ENCODE measurements at regions of chr2 and their contacts with region 1.

Region 1: GRCh38 chr2:190880378-190881073 is at the start of gene GLS:
- DNase-seq: peak; percentile 98
- H3K4me3 Mint-ChIP-seq: peak within 1 kb of the TSS; percentile 94
- H3K27ac Mint-ChIP-seq: peak within 1 kb of the TSS; percentile 100
- H3K4me1 Mint-ChIP-seq: peaks cover 48% of the 10 kb centered on the region
- H3K27me3 Mint-ChIP-seq: no peaks in the 10 kb centered on the region
- total RNA-seq, gene GLS: 146 to 150 TPM

Region 2: DNA sequence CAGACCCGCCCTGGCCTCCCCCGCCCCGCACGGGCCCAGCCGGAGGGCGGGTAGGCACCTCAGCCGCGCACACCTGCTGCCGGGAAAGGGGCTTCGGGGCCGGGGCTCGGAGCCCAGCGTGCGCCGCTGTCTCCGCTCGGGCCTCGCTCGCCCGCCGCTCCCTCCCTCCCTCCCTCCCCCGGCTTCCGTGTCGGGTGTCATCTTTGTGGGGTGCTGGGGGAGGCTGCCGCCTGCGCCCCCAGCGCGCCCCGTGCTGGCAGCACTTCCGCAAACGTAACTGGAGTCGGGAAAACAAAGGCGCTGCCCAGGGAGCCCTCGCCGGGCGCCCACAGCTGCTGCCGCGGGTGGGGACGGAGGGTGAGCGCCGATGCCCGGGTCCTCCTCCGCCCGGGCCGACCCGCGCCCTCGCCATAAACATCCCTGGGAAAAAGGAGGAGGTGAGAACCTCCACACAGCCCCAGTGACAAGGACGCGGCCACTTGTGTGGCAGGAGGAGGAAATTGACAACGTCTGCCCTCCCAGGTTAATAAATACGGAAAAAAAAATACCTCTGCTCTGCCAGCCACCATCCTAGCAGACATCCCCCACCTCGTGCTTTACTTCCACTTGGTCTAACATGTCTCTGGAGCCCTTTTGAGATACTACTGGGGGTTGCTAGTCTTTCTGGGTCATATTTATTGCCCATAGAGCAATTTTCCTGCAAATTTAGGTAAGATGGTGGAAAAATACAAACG is 471.8 kb before region 1 on chr2:
- CTCF ChIA-PET with region 1: no interaction called
- POLR2A ChIA-PET with region 1: interaction called, 17 read pairs
- DNase-seq: peak; percentile 76
- H3K4me3 Mint-ChIP-seq: peak overlapping the region; percentile 84
- H3K27ac Mint-ChIP-seq: peak overlapping the region; percentile 88
- H3K4me1 Mint-ChIP-seq: peaks cover 38% of the 10 kb centered on the region
- H3K27me3 Mint-ChIP-seq: no peaks in the 10 kb centered on the region

Region 3: GRCh38 chr2:190858817-190859216 is 21.7 kb before region 1 on chr2:
- CTCF ChIA-PET with region 1: interaction called, 3 read pairs
- POLR2A ChIA-PET with region 1: interaction called, 23 read pairs
- DNase-seq: no peak
- H3K4me3 Mint-ChIP-seq: no peak overlapping the region
- H3K27ac Mint-ChIP-seq: no peak overlapping the region
- H3K4me1 Mint-ChIP-seq: peaks cover 9% of the 10 kb centered on the region
- H3K27me3 Mint-ChIP-seq: no peaks in the 10 kb centered on the region

Region 4: DNA sequence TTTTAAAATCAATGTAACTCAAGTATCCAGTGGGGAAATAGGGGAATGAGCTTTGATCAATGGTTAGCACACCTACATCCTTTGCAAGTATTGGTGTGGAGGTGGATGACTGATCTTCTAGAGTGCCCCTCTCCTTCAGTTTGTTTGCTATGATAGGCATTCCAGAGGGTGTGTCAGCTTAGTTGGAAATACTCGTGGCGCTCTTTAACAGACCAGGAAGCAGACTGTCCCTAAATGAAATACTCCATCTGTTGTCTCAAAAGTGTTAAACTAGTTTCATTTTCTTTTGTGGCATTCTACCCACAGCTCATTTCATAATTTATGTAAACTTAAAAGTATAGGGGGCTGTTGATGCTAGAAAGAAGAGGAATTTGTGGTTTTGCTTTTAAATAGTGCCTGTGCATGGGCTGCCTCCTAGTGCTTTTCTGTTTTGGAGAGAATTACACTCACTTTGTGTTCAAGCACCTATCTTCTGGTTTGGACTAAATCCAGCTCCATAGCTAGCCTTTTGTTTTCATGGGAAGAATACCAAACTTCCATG is 67.3 kb after region 1 on chr2:
- CTCF ChIA-PET with region 1: no interaction called
- POLR2A ChIA-PET with region 1: interaction called, 13 read pairs
- DNase-seq: no peak
- H3K4me3 Mint-ChIP-seq: no peak overlapping the region
- H3K27ac Mint-ChIP-seq: no peak overlapping the region
- H3K4me1 Mint-ChIP-seq: peaks cover 12% of the 10 kb centered on the region
- H3K27me3 Mint-ChIP-seq: no peaks in the 10 kb centered on the region

Region 5: GRCh38 chr2:191038241-191038725 is 157.8 kb after region 1 on chr2:
- CTCF ChIA-PET with region 1: no interaction called
- POLR2A ChIA-PET with region 1: interaction called, 11 read pairs
- DNase-seq: peak; percentile 69
- H3K4me3 Mint-ChIP-seq: peak overlapping the region; percentile 29
- H3K27ac Mint-ChIP-seq: peak overlapping the region; percentile 88
- H3K4me1 Mint-ChIP-seq: peaks cover 49% of the 10 kb centered on the region
- H3K27me3 Mint-ChIP-seq: no peaks in the 10 kb centered on the region

Region 6: DNA sequence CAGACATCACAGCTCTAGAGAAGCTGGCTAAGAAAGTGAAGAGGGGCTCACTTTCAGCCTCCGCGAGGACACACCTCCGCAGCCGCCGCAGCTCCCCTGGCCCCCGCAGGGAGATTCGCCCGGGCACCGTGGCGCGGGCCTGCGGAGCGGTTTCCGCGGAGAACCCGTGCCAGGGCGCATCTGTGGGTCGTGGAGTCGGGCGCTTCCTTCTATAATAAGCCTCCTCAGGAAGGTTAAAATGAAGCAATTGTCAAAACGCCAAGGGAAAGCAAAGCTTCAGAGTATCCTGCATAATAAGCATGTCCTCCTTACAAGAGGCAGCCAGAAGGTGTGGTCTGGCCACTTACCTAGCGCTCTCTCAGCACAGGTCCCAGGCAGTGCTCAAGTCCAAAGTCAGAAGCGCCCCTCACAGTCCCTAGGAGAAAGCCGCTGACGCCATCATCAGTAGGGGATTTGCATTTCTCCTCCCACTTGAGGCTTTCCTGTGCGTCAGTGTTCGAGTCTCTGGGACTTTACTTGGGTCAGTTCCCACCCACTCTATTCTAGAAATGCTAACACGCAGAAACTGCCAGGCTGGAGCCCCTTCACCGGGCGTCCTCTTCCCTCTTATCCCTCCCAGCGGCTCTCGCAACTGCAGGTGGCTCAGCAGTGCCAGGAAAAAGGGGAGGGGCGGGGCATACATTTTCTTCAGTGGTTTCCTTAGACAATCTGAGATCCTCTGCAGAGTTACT is 270.2 kb after region 1 on chr2 and contains the start of gene STAT4:
- CTCF ChIA-PET with region 1: interaction called, 3 read pairs
- POLR2A ChIA-PET with region 1: interaction called, 22 read pairs
- DNase-seq: peak; percentile 84
- H3K4me3 Mint-ChIP-seq: peak within 1 kb of the TSS; percentile 94
- H3K27ac Mint-ChIP-seq: peak within 1 kb of the TSS; percentile 97
- H3K4me1 Mint-ChIP-seq: peaks cover 75% of the 10 kb centered on the region
- H3K27me3 Mint-ChIP-seq: no peaks in the 10 kb centered on the region
- total RNA-seq, gene STAT4: 122 to 124 TPM